ENCODE measurements at regions of chr17 and their contacts with region 1.

Region 1: GRCh38 chr17:8409966-8410864 is 12.6 kb upstream of the RNF222 start:
- DNase-seq: no peak
- H3K4me3 ChIP-seq: no peak overlapping the region
- H3K27me3 ChIP-seq: peaks cover 1% of the 10 kb centered on the region; the same call in 1 of the 2 replicates
- CTCF ChIP-seq: peak; percentile 89

Region 2: DNA sequence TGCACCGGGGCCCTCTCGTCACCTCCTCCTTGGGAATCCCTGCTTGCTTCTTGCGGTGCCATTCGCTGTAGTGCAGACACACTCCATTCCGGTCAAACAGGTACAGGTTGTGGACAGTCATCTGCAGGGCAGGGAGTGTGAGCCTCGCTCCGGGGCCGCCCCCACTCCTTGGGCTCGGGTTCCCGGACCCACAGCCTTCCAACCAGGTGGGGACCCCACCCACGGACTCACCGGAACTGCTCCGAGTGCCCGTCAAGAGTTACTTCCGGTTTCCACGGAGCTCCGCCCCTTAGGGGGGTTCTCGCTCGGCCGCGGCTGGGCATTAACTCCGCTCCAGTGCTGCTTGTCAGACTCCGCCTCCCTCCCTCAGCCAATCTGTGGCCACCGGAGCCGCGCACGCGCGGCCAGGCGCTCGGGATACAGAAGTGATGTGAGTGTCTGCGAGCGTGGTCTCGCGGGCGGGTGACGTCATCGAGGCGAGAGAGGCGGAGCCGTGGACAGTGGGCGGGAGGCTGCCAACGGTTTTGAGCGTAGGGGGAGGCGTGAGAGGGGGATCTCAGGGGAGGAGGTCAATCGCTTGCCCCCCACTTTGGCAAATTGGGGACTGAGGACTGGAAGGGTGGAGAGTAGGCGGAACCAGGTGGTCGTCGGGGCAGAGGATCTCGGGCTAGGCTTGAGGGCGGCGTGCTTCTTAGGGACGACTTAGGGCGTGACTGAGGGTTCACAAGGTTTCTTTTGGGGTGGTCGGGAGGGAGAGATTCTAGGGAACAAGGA is 478.3 kb before region 1 on chr17 and contains the starts of genes CNTROB and TRAPPC1:
- CTCF ChIA-PET with region 1: no interaction called
- POLR2A ChIA-PET with region 1: no interaction called
- DNase-seq: peak; percentile 97
- H3K4me3 ChIP-seq: peak within 1 kb of the TSS; percentile 68
- H3K27me3 ChIP-seq: no peaks in the 10 kb centered on the region
- CTCF ChIP-seq: no peak
- polyA plus RNA-seq, gene CNTROB: 19.4 and 26.8 TPM in 2 replicates
- polyA plus RNA-seq, gene TRAPPC1: 204 and 264 TPM in 2 replicates

Region 3: DNA sequence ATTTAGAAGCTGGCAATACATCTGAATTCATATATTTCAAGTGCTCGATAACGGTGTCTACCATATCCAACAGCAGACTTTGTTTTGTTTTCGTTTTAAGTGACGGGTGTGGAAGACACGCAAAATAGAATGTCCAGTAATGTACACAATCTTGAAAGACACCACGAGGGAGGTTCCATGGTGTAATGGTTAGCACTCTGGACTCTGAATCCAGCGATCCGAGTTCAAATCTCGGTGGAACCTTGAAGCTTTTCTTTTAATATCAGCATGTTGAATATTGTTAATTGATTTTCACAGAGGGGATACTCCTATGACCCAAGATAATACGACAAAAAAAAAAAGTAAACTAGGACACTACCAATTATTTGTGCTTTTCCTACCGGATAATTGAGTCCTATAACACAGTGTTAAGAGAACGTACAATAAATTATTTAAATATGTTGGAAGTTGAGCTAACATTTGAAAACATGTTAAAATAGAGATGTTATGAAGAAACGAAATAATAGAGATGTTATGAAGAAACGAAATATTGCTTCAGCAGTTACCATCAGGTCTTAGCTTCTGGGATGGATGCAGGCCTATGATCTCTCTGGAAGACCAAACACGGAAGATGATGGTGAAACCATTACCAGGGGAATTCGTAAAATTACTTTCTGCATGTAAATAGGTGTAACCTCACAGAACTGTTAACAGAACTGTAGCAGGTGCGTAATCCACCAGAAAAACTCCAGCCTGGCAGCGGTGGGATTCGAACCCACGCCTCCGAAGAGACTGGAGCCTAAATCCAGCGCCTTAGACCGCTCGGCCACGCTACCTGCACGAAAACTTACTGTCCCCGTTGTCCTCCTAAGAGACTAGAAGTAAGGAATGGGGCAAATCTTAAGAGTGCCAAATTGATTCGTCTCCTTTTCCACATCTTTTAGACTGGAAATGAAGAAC is 290.4 kb before region 1 on chr17:
- CTCF ChIA-PET with region 1: no interaction called
- POLR2A ChIA-PET with region 1: no interaction called
- DNase-seq: peak; percentile 68
- H3K4me3 ChIP-seq: peak overlapping the region; percentile 59
- H3K27me3 ChIP-seq: peaks cover 11% of the 10 kb centered on the region
- CTCF ChIP-seq: no peak

Region 4: DNA sequence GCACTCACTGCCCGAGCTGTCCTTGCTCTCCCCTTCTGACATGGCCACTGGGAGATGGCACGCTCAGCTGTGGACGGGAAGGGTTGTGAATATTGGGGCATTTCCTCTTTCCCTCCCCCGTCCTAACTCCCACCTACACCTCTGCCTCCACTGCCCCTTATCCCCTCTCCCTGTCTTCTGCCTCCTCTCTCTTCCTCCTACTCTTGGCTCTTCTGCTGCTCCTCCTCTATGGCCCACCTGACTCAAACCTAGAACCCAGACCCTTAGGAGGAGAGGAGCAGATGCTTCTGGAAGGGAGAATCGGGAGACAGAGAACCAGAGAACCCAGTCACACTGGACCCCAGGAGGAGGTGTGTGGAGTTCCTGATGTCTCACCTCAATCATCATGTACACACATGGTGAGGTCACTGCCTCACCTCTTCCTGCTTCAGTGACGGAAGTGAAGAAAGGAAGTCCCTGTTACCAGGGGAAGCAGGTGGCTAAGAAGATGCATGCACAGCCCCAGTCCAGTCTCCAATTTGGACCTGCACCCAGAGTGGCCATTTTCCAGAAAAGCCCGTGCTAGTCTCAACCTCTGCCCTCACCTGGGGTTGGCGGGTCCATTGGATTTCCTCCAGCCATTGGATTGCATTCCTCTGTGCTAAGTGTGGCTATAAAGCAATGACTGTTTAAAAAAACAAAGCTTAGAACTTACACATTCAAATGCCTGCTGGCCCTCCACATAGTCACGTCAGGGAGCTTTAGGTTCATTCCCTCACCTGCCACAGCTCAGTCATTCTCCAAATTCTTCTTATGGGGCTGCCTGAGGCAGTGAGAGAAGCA is 16.6 kb before region 1 on chr17:
- CTCF ChIA-PET with region 1: interaction called, 22 read pairs
- POLR2A ChIA-PET with region 1: no interaction called
- DNase-seq: no peak
- H3K4me3 ChIP-seq: no peak overlapping the region
- H3K27me3 ChIP-seq: peaks cover 9% of the 10 kb centered on the region
- CTCF ChIP-seq: no peak

Region 5: DNA sequence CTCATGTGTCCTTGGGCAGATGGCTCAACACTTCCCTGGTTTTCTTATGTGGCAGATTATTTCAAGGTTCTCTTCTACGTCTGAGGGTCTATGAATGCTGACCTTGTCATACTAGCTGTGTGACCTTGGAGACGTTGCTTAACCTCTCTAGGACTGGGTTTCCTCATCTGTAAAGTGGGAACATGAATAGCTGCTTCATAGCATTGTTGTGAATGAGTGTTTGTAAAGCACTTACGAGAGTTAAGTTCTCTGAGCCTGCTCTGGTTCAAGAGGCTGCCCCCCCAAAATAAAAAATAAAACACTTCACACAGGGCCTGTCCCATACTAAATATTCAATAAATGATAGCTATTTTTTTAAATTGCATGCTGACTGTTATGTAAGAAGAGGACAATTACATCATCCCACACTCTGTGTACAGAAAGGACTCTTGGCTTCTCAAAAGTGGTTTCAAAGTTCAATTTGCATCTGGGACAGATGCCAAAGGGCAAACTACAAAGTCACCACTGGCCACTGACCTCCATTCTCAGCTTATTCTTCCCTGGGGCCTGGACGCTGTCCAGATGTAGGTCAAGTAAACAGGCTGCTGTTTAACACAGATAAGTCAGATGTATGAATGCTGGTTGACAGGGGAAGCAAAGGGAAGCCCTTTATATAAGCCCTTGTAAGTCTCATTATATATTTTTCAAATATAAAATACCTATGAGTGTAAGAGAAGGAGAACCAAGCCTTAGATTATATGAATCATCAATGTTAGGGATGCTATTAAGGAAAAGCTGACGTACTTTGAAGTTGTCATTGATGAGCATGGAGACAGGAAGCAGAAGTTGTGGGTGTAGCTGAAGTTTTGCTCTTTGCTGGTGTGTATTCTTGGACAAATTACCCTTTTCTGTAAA is 10.1 kb after region 1 on chr17:
- CTCF ChIA-PET with region 1: interaction called, 16 read pairs
- POLR2A ChIA-PET with region 1: no interaction called
- DNase-seq: no peak
- H3K4me3 ChIP-seq: no peak overlapping the region
- H3K27me3 ChIP-seq: peaks cover 6% of the 10 kb centered on the region
- CTCF ChIP-seq: no peak

Region 6: DNA sequence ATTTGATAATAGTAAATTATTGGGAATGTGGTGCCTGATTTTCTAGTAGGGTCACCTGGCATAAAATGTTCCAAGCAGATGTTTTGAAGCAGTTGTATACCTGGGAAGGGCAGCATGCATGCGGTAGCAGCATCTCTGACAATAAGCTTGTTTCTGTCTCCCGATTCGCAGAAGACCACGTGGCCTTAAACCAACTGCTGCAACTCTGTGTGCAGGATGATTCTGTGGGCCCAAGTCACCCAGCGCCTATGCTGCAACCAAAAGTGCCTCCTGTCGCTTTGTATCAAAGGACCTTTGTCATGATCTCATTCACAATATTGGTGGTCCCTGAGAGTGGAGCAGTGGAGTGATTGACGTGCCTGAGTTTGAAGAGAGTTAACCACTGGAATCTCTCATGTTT is 33.5 kb after region 1 on chr17:
- CTCF ChIA-PET with region 1: no interaction called
- POLR2A ChIA-PET with region 1: no interaction called
- DNase-seq: no peak
- H3K4me3 ChIP-seq: no peak overlapping the region
- H3K27me3 ChIP-seq: no peaks in the 10 kb centered on the region
- CTCF ChIP-seq: no peak

Region 7: GRCh38 chr17:8745586-8746500 is 335.6 kb after region 1 on chr17:
- CTCF ChIA-PET with region 1: interaction called, 40 read pairs
- POLR2A ChIA-PET with region 1: no interaction called
- DNase-seq: no peak
- H3K4me3 ChIP-seq: peak overlapping the region; percentile 69
- H3K27me3 ChIP-seq: peaks cover 3% of the 10 kb centered on the region
- CTCF ChIP-seq: peak; percentile 63

Measured in BJ (cell line).